GM12878 (cell line): ENCODE measurements at regions of chr4 and their contacts with region 1.

Region 1: DNA sequence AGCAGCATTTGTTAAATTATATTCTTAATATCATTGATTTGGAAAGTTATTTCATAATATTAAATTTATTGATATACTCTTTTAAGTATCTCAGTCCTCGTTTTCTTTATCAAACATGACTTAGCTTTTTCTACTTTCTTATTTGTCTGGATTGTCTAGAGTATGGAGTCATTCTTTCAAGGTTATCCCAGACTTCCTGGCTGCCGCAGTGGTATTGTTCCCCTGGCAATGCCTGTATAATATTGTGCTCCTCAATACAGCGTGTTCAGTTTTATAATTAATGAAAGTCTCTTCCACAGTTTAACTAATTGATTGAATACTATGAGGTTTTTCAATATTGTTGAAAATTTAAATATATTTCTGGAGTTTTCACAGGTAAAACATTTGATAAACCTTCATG is 310.9 kb downstream of the ANKRD50 start:
- DNase-seq: no peak
- ATAC-seq: no peak
- H3K4me3 ChIP-seq: no peak overlapping the region
- H3K27ac ChIP-seq: no peak overlapping the region
- H3K4me1 ChIP-seq: no peaks in the 10 kb centered on the region
- H3K27me3 ChIP-seq: no peaks in the 10 kb centered on the region
- CTCF ChIP-seq: no peak
- EP300 ChIP-seq: no peak
- POLR2A ChIP-seq: no peak
- RAD21 ChIP-seq: no peak

Region 2: DNA sequence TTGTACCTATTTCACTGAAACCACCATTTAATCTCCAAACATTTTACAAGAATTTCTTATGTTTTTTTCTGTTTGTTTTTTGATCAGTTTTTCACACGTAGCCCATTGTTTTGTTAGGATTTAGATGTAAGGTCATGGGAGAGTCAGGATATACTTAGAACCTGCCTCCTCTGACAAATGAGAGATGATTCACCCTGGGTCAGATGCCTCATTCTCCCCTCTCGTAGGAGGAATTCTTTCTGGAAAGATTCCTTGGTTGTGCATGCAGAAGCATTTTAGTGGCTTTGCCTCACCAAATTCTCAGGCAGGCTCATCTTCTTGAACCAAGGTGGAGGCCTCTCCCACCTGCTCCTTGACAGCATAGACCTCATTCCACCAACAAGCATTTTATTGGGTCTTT is 405.7 kb before region 1 on chr4:
- CTCF ChIA-PET with region 1: no interaction called
- POLR2A ChIA-PET with region 1: no interaction called
- RAD21 ChIA-PET with region 1: no interaction called
- SMC1A ChIA-PET with region 1: no interaction called
- in situ Hi-C with region 1: no loop called
- intact Hi-C with region 1: no loop called
- DNase-seq: no peak
- ATAC-seq: no peak
- H3K4me3 ChIP-seq: no peak overlapping the region
- H3K27ac ChIP-seq: no peak overlapping the region
- H3K4me1 ChIP-seq: no peaks in the 10 kb centered on the region
- H3K27me3 ChIP-seq: no peaks in the 10 kb centered on the region
- CTCF ChIP-seq: no peak
- EP300 ChIP-seq: no peak
- POLR2A ChIP-seq: no peak
- RAD21 ChIP-seq: no peak

Region 3: GRCh38 chr4:124390861-124391260 is 10.7 kb before region 1 on chr4:
- CTCF ChIA-PET with region 1: no interaction called
- POLR2A ChIA-PET with region 1: no interaction called
- RAD21 ChIA-PET with region 1: no interaction called
- SMC1A ChIA-PET with region 1: no interaction called
- in situ Hi-C with region 1: no loop called
- intact Hi-C with region 1: loop called (anchors 1 kb)
- DNase-seq: no peak
- ATAC-seq: no peak
- H3K4me3 ChIP-seq: no peak overlapping the region
- H3K27ac ChIP-seq: no peak overlapping the region
- H3K4me1 ChIP-seq: no peaks in the 10 kb centered on the region
- H3K27me3 ChIP-seq: no peaks in the 10 kb centered on the region
- CTCF ChIP-seq: no peak
- EP300 ChIP-seq: no peak
- POLR2A ChIP-seq: no peak
- RAD21 ChIP-seq: no peak